A549 (cell line): ENCODE measurements at regions of chr19 and their contacts with region 1.

Region 1: DNA sequence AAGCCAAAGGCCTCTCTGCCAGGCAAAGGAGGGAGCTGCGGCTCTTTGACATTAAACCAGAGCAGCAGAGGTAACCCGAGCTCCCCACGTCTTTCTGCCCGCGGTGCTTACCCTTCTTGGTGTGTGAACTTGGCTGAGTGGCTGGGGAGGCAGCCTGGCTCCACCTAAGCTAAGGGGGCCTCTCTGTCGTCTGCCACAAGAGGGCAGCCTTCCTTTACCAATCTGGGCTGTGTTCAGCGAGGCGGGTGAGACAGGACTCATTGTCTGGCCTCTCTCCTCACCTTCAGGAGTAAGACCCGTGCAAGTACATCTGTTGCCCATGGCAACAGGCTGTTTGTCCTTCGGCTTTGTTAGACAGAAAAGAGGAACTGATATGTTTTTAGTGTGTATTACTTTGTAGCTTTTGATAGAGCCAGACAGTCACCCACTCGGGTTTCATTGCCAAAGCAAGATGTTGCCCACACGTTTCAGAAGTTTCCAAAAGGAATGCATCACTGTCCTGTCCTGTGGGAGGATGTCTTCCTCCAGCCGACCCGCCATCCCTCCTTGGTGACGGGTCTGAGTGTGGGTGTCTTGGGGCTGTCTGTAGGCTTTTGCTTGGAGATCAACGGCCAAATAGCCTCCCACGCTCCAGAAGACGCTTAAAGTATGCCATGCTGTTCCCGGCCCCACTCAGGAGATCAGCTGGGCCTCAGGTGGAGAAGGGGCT is 4.6 kb downstream of the POP4 start:
- DNase-seq: peak; percentile 89 to 96
- ATAC-seq: peak; percentile 77 to 90
- H3K4me3 ChIP-seq: no peak overlapping the region
- H3K27ac ChIP-seq: no peak overlapping the region
- H3K4me1 ChIP-seq: peaks cover 7% of the 10 kb centered on the region; the same call in 1 of the 3 replicates
- CTCF ChIP-seq: peak; percentile 98
- EP300 ChIP-seq: no peak
- POLR2A ChIP-seq: no peak
- RAD21 ChIP-seq: peak; percentile 91 to 98

Region 2: DNA sequence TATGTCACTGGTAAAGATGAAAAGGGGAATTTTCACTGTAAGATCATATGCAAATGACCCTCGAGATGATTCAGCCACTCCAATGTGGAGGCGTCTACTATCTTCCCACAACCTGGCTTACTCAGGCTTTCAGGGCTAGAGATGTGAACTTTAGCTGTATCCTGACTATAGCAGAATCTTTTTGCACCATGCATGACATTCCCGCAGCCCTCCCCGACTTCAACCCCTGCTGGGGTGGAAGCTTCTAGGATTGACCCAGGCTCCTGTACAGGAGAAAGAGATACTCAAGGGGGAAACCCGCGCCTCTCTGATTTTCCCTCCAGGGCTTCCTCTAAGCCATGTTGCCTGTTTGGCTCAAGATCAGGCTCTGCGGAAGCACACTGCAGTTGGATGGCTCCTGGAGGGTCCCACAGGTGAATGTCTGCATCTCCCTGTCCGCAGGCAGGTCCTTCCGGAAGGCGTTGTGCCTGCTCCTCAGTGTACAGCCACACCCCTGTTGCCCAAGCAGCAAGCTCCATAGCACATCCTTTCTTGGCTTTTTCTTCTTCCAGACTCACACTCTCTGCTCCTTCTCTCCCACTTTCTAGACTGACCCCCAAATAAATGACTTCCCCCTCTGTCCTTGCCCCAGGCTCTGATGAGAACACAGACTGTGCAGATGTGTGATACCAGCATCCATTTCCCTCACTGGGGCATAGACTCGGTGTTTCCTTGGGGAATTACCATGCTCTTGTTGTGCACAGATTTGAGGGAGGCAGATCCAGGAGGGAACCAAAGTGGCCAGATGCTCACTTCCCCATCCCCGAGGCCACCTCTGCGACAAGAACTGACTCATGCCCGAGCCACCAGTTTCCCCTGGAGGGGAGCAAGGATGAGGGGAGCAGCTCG is 33.7 kb before region 1 on chr19:
- CTCF ChIA-PET with region 1: interaction called, 14 read pairs
- POLR2A ChIA-PET with region 1: interaction called, 17 read pairs
- DNase-seq: no peak
- ATAC-seq: peak in 1 of 2 experiments; percentile 34; a peak in 3 of 6 replicates
- H3K4me3 ChIP-seq: no peak overlapping the region
- H3K27ac ChIP-seq: no peak overlapping the region
- H3K4me1 ChIP-seq: no peaks in the 10 kb centered on the region
- CTCF ChIP-seq: no peak
- EP300 ChIP-seq: no peak
- POLR2A ChIP-seq: no peak
- RAD21 ChIP-seq: no peak

Region 3: GRCh38 chr19:29622138-29623070 is 11.7 kb after region 1 on chr19:
- CTCF ChIA-PET with region 1: interaction called, 282 read pairs
- POLR2A ChIA-PET with region 1: interaction called, 18 read pairs
- DNase-seq: no peak
- ATAC-seq: peak; percentile 12 to 33; a peak in 3 of 6 replicates
- H3K4me3 ChIP-seq: no peak overlapping the region
- H3K27ac ChIP-seq: no peak overlapping the region
- H3K4me1 ChIP-seq: no peaks in the 10 kb centered on the region
- CTCF ChIP-seq: no peak
- EP300 ChIP-seq: no peak
- POLR2A ChIP-seq: no peak
- RAD21 ChIP-seq: no peak

Region 4: GRCh38 chr19:29655648-29656320 is 45.1 kb after region 1 on chr19:
- CTCF ChIA-PET with region 1: interaction called, 37 read pairs
- POLR2A ChIA-PET with region 1: no interaction called
- DNase-seq: no peak
- ATAC-seq: peak; percentile 41 to 48; a peak in 4 of 6 replicates
- H3K4me3 ChIP-seq: no peak overlapping the region
- H3K27ac ChIP-seq: no peak overlapping the region
- H3K4me1 ChIP-seq: no peaks in the 10 kb centered on the region
- CTCF ChIP-seq: no peak
- EP300 ChIP-seq: no peak
- POLR2A ChIP-seq: no peak
- RAD21 ChIP-seq: no peak

Region 5: DNA sequence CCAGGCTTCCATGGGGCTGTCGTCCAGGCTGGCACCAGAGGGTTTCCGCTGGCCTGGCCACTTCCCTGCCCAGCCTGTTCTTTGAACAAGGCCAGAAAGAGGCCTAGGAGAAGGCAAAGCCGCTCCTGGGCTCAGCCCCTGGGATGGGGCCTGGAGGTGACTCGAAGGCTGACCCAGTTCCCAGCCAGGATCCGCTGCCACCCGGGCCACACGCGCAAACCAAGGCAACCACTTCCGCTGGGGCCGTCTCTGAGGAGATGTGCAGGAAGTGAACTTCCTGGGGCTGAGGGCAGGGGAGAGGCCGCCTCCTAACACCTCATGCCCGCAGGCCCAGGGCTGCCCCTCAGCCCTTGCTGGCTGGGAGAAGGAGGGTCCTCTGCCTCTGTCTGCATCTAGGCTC is 69.7 kb after region 1 on chr19:
- CTCF ChIA-PET with region 1: interaction called, 78 read pairs
- POLR2A ChIA-PET with region 1: no interaction called
- DNase-seq: no peak
- ATAC-seq: peak in 1 of 2 experiments; percentile 3; a peak in 3 of 6 replicates
- H3K4me3 ChIP-seq: no peak overlapping the region
- H3K27ac ChIP-seq: no peak overlapping the region
- H3K4me1 ChIP-seq: no peaks in the 10 kb centered on the region
- CTCF ChIP-seq: no peak
- EP300 ChIP-seq: no peak
- POLR2A ChIP-seq: no peak
- RAD21 ChIP-seq: no peak

Region 6: GRCh38 chr19:29714953-29715700 is 104.4 kb after region 1 on chr19 and contains the start of gene C19orf12:
- CTCF ChIA-PET with region 1: interaction called, 490 read pairs
- POLR2A ChIA-PET with region 1: interaction called, 110 read pairs
- DNase-seq: peak; percentile 63 to 77
- ATAC-seq: peak; percentile 83 to 86
- H3K4me3 ChIP-seq: peak within 1 kb of the TSS; percentile 82
- H3K27ac ChIP-seq: peak within 1 kb of the TSS; percentile 91 to 93
- H3K4me1 ChIP-seq: peaks cover 21% of the 10 kb centered on the region
- CTCF ChIP-seq: no peak
- EP300 ChIP-seq: no peak
- POLR2A ChIP-seq: peak; percentile 93
- RAD21 ChIP-seq: no peak
- polyA plus RNA-seq, gene C19orf12: 33.6 and 34.3 TPM in 2 replicates

Region 7: DNA sequence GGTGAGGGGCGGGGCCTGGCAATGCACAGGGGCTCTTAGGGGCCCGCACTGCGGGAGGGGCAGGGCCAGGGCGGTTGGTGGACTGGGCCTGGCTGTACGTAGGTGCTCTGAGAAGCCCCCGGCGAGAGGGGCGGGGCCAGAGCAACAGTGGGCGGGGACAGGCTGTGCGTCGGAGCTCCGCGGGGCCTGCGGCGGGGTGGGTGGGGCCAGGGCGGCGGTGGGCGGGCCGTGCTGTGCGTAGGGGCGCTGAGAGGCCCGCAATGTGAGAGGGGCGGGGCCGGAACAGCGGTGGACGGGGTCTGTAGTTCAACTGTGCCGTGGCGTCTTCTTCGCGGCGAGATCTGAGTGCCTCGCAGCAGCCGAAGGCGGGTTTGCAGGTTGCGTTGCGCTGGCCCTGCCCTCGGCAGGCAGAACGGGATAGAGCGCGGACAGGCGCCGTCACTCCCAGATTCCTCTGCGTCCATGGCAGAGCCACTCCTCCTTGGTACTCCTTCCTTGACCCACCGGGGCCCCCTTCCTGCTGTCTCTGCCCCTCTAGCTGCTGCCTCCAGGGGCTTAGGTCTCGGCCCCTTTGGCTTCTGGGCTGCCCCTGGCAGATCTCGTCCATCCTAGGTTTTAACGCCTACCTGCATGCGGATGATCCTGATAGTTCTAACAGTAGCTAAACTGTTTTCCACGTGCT is 234.3 kb after region 1 on chr19:
- CTCF ChIA-PET with region 1: interaction called, 7 read pairs
- POLR2A ChIA-PET with region 1: interaction called, 14 read pairs
- DNase-seq: peak; percentile 92 to 99
- ATAC-seq: peak; percentile 78 to 88
- H3K4me3 ChIP-seq: peak overlapping the region; percentile 57
- H3K27ac ChIP-seq: peak overlapping the region; percentile 61 to 84
- H3K4me1 ChIP-seq: peaks cover 20% of the 10 kb centered on the region
- CTCF ChIP-seq: no peak
- EP300 ChIP-seq: no peak
- POLR2A ChIP-seq: peak; percentile 72
- RAD21 ChIP-seq: no peak